ENCODE measurements at regions of chr12 and their contacts with region 1.

Region 1: GRCh38 chr12:64431791-64432190 is 20.1 kb upstream of the TBK1 start:
- DNase-seq: no peak
- H3K4me3 ChIP-seq: no peak overlapping the region
- H3K27ac ChIP-seq: no peak overlapping the region
- H3K4me1 ChIP-seq: no peaks in the 10 kb centered on the region
- H3K27me3 ChIP-seq: no peaks in the 10 kb centered on the region
- CTCF ChIP-seq: no peak
- EP300 ChIP-seq: no peak
- POLR2A ChIP-seq: no peak
- RAD21 ChIP-seq: no peak

Region 2: GRCh38 chr12:64419696-64420095 is 12.1 kb before region 1 on chr12:
- CTCF ChIA-PET with region 1: no interaction called
- POLR2A ChIA-PET with region 1: interaction called, 30 read pairs
- DNase-seq: no peak
- H3K4me3 ChIP-seq: no peak overlapping the region
- H3K27ac ChIP-seq: no peak overlapping the region
- H3K4me1 ChIP-seq: no peaks in the 10 kb centered on the region
- H3K27me3 ChIP-seq: no peaks in the 10 kb centered on the region
- CTCF ChIP-seq: no peak
- EP300 ChIP-seq: no peak
- POLR2A ChIP-seq: no peak
- RAD21 ChIP-seq: no peak

Region 3: GRCh38 chr12:64445490-64445889 is 13.7 kb after region 1 on chr12:
- CTCF ChIA-PET with region 1: interaction called, 8 read pairs
- POLR2A ChIA-PET with region 1: interaction called, 13 read pairs
- DNase-seq: no peak
- H3K4me3 ChIP-seq: no peak overlapping the region
- H3K27ac ChIP-seq: no peak overlapping the region
- H3K4me1 ChIP-seq: peaks cover 0 to 3% (median 3%) of the 10 kb centered on the region in 4 experiments; a peak in 2 of 7 replicates
- H3K27me3 ChIP-seq: no peaks in the 10 kb centered on the region
- CTCF ChIP-seq: no peak
- EP300 ChIP-seq: no peak
- POLR2A ChIP-seq: no peak
- RAD21 ChIP-seq: no peak

Region 4: DNA sequence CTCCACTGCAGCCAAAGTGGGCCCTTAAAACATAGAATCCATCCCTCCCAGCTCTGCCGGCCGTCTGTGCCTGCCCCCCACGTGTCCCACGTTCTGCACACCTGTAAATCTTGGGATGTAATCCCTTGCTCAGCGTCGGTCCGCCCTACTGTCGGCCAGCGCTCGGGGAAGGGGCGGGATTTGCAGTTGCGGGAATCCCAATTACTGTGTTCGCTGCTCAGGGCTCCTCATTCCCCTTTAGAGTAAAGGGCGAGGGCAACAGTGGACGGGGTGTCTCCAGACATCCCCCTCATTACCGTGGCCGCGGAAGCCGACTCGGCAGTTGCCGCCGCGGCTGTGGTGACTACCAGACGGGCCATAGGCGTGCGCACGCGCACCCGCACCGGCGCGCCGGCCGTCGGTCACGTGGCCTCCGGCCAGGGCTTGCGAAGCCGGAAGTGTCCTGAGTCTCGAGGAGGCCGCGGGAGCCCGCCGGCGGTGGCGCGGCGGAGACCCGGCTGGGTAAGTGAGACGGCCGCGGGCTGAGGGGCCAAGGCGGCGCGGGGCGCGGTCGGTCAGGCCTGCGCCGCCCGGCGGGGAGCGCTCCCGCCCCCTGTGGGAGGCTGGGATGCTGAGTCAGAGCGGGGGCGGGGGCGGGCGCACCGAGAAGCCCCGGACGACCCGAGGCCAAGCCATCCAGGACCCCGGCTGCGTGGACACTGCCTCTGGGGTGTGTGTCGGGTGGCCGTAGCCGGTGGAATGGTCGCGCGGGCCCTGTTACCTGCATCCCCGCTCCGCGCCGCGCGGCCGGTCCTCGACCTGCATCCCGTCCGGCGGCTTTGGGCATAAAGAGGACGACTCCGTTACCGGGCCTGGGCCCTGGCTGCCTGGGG is 20.1 kb after region 1 on chr12 and contains the start of gene TBK1:
- CTCF ChIA-PET with region 1: interaction called, 3 read pairs
- POLR2A ChIA-PET with region 1: interaction called, 13 read pairs
- DNase-seq: peak; percentile 53 to 95
- H3K4me3 ChIP-seq: peak within 1 kb of the TSS; percentile 75 to 91 (median 88)
- H3K27ac ChIP-seq: peak within 1 kb of the TSS; percentile 65
- H3K4me1 ChIP-seq: peaks cover 0 to 10% (median 3%) of the 10 kb centered on the region in 4 experiments; a peak in 2 of 7 replicates
- H3K27me3 ChIP-seq: no peaks in the 10 kb centered on the region
- CTCF ChIP-seq: 0 out of 4 replicates have a peak, but pooled peaks of 1 of the 3 experiments have one; percentile 0
- EP300 ChIP-seq: no peak
- POLR2A ChIP-seq: peak; percentile 50 to 70; a peak in 2 of 3 replicates
- RAD21 ChIP-seq: no peak
- total RNA-seq, gene TBK1: 19.2 and 20.4 TPM in 2 replicates

Measured in H1 (cell line).